Left cardiac atrium (tissue), 4 donors: ENCODE measurements at regions of chr2 and their contacts with region 1.

Region 1: GRCh38 chr2:55049043-55049793 is 1.0 kb downstream of the RTN4 start:
- DNase-seq: peak; percentile 91
- ATAC-seq: peak; percentile 59 to 64

Region 2: DNA sequence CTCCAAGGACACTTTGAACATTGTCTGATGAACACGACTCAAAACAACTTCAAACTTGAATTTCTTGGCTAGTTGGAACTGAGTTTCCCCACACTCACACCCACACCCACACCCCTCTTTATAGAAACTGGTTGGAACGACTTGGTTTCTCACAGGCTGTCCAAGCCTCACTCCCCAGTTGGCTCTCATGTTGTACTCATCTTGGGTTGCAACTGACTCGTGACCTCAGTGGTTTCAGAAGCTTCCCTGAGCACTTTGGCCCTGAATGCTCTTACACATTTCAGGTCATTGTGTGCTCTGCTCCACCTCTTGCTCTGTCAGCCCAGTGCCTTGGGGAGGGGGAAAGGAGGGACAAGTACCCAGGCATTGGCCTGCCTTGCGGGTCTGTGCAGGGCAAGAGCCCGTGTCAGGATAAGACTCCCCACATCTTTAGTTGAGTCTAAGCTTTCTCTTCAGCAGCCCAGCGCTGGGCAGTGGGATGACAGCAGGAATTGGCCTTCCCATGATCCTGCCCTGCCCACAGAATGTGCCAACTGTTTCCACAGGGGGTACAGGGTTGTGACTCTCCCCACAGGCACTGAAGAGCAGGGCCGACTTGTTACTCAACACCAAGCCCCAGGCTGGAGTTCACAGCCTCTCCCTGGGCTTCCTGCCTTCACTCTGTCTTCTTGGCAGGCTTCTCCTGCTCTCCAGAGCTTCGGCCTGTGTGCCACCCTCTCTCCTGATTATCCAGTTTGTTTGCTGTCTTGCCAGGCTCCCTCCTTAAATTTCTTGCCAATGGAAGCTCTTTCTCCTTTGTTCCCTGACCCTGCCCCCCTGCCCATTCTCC is 103.6 kb before region 1 on chr2:
- intact Hi-C with region 1: no loop called
- DNase-seq: peak; percentile 55
- ATAC-seq: peak; percentile 86 to 89

Region 3: DNA sequence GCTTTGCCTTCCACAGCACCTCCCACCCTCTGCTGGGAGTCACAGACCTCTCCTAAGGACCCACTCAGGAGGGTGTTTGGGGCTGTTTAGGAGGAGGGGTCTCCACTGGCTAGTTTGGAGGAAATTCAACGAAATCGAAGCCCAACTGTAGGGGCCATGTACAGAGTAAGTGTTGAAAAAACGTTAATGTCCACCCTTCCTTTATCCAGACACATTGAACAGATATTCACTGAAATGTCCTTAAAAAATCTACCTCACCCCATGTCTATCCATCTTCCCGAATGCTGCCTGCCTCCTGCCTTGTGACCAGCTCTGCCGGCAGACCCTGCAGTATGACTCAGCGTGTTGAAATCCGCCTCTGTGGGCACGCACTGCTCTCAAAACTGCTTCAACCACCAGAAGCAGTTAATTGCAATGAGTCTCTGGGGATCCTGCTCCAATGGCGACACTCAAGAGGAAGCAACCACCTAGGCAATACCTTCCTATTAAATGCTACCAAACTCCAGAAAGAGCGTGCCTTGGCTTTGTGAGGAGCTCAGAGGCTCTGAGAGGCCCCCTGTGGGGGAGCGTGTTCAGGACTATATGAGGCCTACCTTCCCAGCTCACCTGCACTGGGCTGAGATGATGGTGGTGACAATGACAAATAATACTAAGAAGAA is 62.5 kb after region 1 on chr2:
- intact Hi-C with region 1: loop called in 1 of 2 experiments (anchors 5 kb)
- DNase-seq: peak; percentile 80
- ATAC-seq: peak; percentile 76 to 84